ENCODE measurements at regions of chr1 and their contacts with region 1.

Region 1: DNA sequence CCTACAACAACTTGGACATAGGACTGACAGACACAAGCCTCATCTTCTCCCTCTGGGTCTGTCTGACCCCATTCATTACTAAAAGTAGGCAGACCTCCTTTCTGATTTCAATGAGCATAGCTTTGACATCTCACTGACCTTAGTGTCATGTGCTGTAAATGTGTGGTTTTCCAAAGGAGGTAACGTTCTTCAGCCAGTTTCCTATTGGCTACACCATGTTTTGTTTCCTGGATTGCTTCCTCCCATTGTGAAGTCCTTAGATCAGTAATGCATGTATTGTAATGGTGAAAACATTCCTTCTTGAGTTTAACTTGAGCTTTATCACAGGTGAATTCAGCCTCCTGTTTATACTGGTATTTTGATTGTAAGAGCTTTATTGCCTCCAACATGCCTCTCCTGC is 20.6 kb downstream of the STXBP3 start:
- DNase-seq: no peak
- H3K4me3 Mint-ChIP-seq: no peak overlapping the region
- H3K27ac Mint-ChIP-seq: no peak overlapping the region
- H3K4me1 Mint-ChIP-seq: no peaks in the 10 kb centered on the region
- H3K27me3 Mint-ChIP-seq: no peaks in the 10 kb centered on the region
- CTCF ChIP-seq: no peak

Region 2: GRCh38 chr1:108801101-108801500 is 34.0 kb after region 1 on chr1:
- CTCF ChIA-PET with region 1: no interaction called
- POLR2A ChIA-PET with region 1: interaction called, 3 read pairs
- intact Hi-C with region 1: loop called (anchors 2 kb)
- DNase-seq: no peak
- H3K4me3 Mint-ChIP-seq: no peak overlapping the region
- H3K27ac Mint-ChIP-seq: peak overlapping the region; percentile 72
- H3K4me1 Mint-ChIP-seq: peaks cover 7% of the 10 kb centered on the region
- H3K27me3 Mint-ChIP-seq: no peaks in the 10 kb centered on the region
- CTCF ChIP-seq: no peak

Region 3: GRCh38 chr1:108963052-108963686 is 196.1 kb after region 1 on chr1 and contains the start of gene CLCC1:
- CTCF ChIA-PET with region 1: no interaction called
- POLR2A ChIA-PET with region 1: no interaction called
- intact Hi-C with region 1: no loop called
- DNase-seq: peak; percentile 94
- H3K4me3 Mint-ChIP-seq: peak within 1 kb of the TSS; percentile 86
- H3K27ac Mint-ChIP-seq: peak within 1 kb of the TSS; percentile 83
- H3K4me1 Mint-ChIP-seq: peaks cover 18% of the 10 kb centered on the region
- H3K27me3 Mint-ChIP-seq: no peaks in the 10 kb centered on the region
- CTCF ChIP-seq: no peak
- total RNA-seq, gene CLCC1: 36.6 and 46.3 TPM in 2 replicates

Measured in MCF 10A (cell line).